ENCODE measurements at regions of chr1 and their contacts with region 1.

Region 1: GRCh38 chr1:162905174-162906158 is 44.5 kb upstream of the CCDC190 start:
- DNase-seq: peak; percentile 82
- H3K4me3 ChIP-seq: no peak overlapping the region
- H3K27ac ChIP-seq: peak overlapping the region; percentile 51
- H3K4me1 ChIP-seq: peaks cover 42% of the 10 kb centered on the region
- H3K27me3 ChIP-seq: no peaks in the 10 kb centered on the region
- CTCF ChIP-seq: no peak

Region 2: DNA sequence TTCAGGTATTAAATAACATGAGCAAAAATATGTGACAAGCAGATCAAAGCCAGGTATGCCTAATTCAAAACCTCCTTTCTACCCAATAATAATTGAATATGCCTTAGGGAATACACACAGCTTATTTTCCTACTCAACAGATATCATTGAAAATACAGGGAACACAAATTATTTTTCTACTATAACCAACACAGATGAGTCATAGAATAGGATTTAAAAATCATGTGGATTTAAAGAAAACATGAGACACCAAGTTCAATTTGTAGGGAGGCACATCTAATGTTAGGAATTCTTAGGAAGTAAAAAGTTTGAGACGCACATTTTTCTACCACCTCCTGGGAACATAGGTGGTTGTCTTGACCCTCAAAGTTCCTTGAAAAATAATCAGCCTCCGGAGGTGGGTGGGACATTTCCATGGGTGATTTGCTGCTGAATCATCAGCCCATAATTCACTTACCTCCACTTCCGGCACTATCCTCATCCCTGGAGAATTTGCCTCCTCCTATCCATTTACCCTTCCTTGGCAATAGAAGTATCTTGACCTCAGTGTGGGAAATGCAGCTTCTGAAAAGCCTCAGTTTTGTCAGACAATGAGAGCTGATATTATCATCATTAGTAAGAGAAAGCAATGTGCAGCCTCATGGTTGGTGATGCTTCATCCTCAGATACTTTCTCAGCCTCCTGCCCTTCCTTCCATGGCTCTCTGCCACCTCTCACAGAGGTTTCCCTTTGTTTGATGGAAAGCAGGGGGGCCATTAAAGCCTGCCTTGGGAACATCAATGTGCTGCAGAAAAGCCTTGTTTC is 130.2 kb after region 1 on chr1:
- CTCF ChIA-PET with region 1: no interaction called
- dilution Hi-C with region 1: no loop called
- in situ Hi-C with region 1: no loop called
- intact Hi-C with region 1: loop called (anchors 2 kb)
- DNase-seq: peak; percentile 98
- H3K4me3 ChIP-seq: no peak overlapping the region
- H3K27ac ChIP-seq: peak overlapping the region; percentile 83
- H3K4me1 ChIP-seq: peaks cover 29% of the 10 kb centered on the region
- H3K27me3 ChIP-seq: no peaks in the 10 kb centered on the region
- CTCF ChIP-seq: no peak